Prostate gland (tissue), 2 donors: ENCODE measurements at regions of chr11 and their contacts with region 1.

Region 1: DNA sequence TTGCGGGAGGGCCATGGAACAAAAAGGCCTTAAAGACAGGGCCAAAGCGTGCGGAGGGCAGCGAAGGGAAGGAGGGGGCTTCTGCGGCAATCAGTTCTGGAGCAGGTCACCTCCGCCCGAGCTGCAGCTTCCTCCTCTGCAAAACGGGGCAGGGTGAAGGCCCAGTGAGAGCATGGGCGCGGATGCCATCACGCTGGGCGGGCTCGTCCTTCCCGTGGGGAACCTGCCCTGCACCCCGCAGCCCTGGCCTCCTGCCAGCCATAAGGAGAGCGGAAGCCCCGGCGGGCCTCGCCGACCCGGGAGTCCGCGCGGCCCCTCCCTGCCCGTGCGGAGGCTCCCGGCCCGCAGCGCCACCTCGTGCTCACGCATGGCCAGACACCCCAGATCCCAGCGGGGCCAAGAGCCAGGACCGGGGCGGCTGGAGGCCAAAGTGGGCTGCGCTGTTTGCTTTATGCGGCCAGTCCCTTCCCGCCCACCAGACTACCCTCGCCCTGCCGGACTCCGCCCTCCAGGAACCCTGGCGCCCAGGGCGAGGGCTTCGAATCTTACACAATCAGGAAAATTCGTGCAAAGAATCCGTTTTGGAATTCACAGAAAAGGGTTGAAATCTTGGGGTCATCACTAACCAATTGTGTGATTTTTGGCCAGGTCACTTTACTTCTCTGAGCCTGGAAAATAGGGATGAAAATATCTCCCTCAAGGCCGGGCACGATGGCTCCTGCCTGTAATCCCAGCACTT is 16.1 kb downstream of the TSKU start:
- DNase-seq: peak; percentile 76
- H3K4me3 ChIP-seq: peak overlapping the region in 1 of 2 donors; percentile 7
- H3K27ac ChIP-seq: peak overlapping the region; percentile 62 to 70
- H3K4me1 ChIP-seq: peaks cover 19% of the 10 kb centered on the region
- H3K27me3 ChIP-seq: no peaks in the 10 kb centered on the region
- CTCF ChIP-seq: peak; percentile 89 to 98 (median 95)
- POLR2A ChIP-seq: no peak

Region 2: DNA sequence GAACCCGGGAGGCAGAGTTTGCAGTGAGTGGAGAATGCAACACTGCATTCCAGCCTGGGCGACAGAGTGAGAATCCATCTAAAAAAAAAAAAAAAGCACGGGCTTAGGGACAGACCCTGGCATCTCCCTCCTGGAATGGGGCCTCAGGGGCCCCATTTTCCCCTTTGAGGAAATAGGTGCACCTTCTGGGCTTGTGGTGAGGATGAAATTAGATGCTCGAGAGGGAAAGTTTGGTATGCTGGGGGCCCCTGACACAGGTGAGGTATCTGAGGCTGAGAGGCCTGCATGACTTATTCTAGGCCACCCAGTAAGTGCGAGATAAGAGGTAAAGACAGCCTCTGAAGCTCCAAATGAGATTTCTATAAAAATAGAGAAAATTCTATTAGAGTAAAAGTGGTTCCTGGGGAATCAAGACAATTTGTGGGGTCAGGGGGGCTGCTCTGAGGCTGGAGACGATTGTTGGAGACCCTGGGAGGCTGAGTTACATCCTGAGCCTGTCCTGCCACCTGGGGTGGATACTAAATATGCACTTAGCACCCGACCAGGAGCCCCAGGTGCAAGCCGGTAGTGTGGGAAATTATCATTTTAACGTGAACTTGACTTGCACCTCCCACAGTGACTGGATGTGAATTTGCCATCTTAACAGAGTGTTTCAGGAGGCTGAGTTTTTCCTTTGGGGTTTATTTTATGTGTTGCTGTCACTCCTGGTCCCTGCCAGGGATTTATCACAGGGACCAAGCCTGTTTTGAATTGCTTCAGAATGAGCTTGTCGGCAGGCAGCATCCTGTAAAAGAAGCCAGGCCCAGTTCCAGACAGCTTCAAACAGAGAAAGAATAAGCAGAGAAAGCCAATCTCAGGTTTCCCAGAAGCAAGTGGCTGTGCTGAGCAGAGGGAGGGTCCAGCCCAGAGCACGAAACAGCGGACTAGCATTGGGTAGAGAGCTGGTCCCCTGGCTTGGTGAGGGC is 64.5 kb before region 1 on chr11:
- intact Hi-C with region 1: loop called (anchors 1 kb)
- DNase-seq: peak; percentile 45
- H3K4me3 ChIP-seq: no peak overlapping the region
- H3K27ac ChIP-seq: peak overlapping the region in 1 of 2 donors; percentile 47
- H3K4me1 ChIP-seq: no peaks in the 10 kb centered on the region
- H3K27me3 ChIP-seq: no peaks in the 10 kb centered on the region
- CTCF ChIP-seq: no peak
- POLR2A ChIP-seq: no peak

Region 3: GRCh38 chr11:77127232-77127911 is 328.1 kb after region 1 on chr11:
- intact Hi-C with region 1: no loop called
- DNase-seq: no peak
- H3K4me3 ChIP-seq: peak overlapping the region; percentile 11 to 21
- H3K27ac ChIP-seq: no peak overlapping the region
- H3K4me1 ChIP-seq: no peaks in the 10 kb centered on the region
- H3K27me3 ChIP-seq: no peaks in the 10 kb centered on the region
- CTCF ChIP-seq: peak; percentile 78 to 98 (median 92)
- POLR2A ChIP-seq: no peak